K562 (cell line): ENCODE measurements at regions of chr22 and their contacts with region 1.

Region 1: GRCh38 chr22:38696606-38697424 is 3.9 kb downstream of the JOSD1 start:
- DNase-seq: peak in 2 of 4 experiments; percentile 29 to 43
- ATAC-seq: no peak
- H3K4me3 ChIP-seq: peak overlapping the region; percentile 89; the same call in 1 of the 2 replicates
- H3K27ac ChIP-seq: peak overlapping the region; percentile 50
- H3K4me1 ChIP-seq: peaks cover 34 to 45% of the 10 kb centered on the region in 2 experiments; a peak in 4 of 5 replicates
- H3K27me3 ChIP-seq: no peaks in the 10 kb centered on the region
- CTCF ChIP-seq: no peak
- EP300 ChIP-seq: no peak
- POLR2A ChIP-seq: no peak
- RAD21 ChIP-seq: no peak

Region 2: DNA sequence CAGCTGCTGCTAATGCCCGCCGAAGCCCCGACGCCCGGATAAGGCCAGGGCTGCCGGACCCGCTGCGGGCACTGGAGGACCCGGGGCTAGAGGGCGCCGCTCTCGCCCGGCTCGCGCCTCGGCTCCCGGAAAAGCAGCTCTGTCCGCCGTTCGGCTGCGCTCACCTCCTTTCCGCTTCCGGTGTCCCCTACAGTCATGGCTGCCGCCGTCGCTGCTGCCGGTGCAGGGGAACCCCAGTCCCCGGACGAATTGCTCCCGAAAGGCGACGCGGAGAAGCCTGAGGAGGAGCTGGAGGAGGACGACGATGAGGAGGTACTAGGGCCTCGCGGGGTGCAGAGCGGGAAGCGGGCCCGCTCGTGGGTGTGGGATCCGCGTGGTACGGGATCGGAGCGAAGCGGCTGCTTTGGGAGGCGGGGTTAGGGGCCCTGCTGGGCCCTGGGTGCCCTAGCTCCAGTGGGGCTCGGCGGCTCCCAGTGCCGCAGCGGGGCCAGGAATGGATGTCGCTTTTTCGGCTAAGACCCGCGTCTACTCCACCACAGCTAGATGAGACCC is 15.0 kb before region 1 on chr22 and contains the start of gene TOMM22:
- CTCF ChIA-PET with region 1: no interaction called
- POLR2A ChIA-PET with region 1: interaction called, 12 read pairs
- in situ Hi-C with region 1: no loop called
- intact Hi-C with region 1: no loop called
- DNase-seq: peak; percentile 81 to 89 (median 84)
- ATAC-seq: peak; percentile 99
- H3K4me3 ChIP-seq: peak within 1 kb of the TSS; percentile 89
- H3K27ac ChIP-seq: peak within 1 kb of the TSS; percentile 73
- H3K4me1 ChIP-seq: peaks cover 4 to 13% of the 10 kb centered on the region in 2 experiments; a peak in 4 of 5 replicates
- H3K27me3 ChIP-seq: no peaks in the 10 kb centered on the region
- CTCF ChIP-seq: peak; percentile 71 to 79 (median 76)
- EP300 ChIP-seq: no peak
- POLR2A ChIP-seq: peak; percentile 93
- RAD21 ChIP-seq: peak; percentile 28 to 34; a peak in 3 of 4 replicates
- polyA plus RNA-seq, gene TOMM22: 25.8 to 36.3 TPM

Region 3: GRCh38 chr22:39155421-39155820 is 458.6 kb after region 1 on chr22:
- CTCF ChIA-PET with region 1: no interaction called
- POLR2A ChIA-PET with region 1: no interaction called
- in situ Hi-C with region 1: no loop called
- intact Hi-C with region 1: no loop called
- DNase-seq: no peak
- ATAC-seq: no peak
- H3K4me3 ChIP-seq: no peak overlapping the region
- H3K27ac ChIP-seq: no peak overlapping the region
- H3K4me1 ChIP-seq: peaks cover 0 to 15% of the 10 kb centered on the region in 2 experiments; a peak in 3 of 5 replicates
- H3K27me3 ChIP-seq: no peaks in the 10 kb centered on the region
- CTCF ChIP-seq: no peak
- EP300 ChIP-seq: no peak
- POLR2A ChIP-seq: no peak
- RAD21 ChIP-seq: no peak